ENCODE measurements at regions of chr5 and their contacts with region 1.

Region 1: DNA sequence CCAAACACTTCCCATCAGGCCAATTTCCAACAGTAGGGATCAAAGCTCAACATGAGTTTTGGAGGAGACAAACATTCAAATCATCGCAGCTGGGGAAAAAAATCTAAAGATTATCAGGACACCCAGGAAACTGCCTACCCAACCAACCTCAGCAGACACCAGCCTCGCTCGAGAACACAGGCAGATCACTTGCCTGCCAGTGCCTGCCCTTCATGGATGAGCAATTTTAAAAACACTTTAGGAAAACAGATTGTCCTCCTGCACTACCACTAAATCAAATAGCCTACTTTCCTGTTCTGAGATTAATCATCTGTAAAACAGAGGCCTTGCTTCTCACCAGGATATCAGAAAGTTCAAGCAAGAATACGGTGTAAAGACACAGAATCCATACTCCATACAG is 14.7 kb upstream of the TMEM174 start:
- DNase-seq: no peak
- ATAC-seq: no peak
- H3K4me3 ChIP-seq: no peak overlapping the region
- H3K27ac ChIP-seq: no peak overlapping the region
- H3K4me1 ChIP-seq: no peaks in the 10 kb centered on the region
- H3K27me3 ChIP-seq: no peaks in the 10 kb centered on the region
- CTCF ChIP-seq: no peak

Region 2: GRCh38 chr5:72733810-72734209 is 424.5 kb before region 1 on chr5:
- CTCF ChIA-PET with region 1: no interaction called
- POLR2A ChIA-PET with region 1: no interaction called
- in situ Hi-C with region 1: no loop called
- intact Hi-C with region 1: no loop called
- DNase-seq: no peak
- ATAC-seq: no peak
- H3K4me3 ChIP-seq: no peak overlapping the region
- H3K27ac ChIP-seq: no peak overlapping the region
- H3K4me1 ChIP-seq: no peaks in the 10 kb centered on the region
- H3K27me3 ChIP-seq: no peaks in the 10 kb centered on the region
- CTCF ChIP-seq: no peak

Region 3: DNA sequence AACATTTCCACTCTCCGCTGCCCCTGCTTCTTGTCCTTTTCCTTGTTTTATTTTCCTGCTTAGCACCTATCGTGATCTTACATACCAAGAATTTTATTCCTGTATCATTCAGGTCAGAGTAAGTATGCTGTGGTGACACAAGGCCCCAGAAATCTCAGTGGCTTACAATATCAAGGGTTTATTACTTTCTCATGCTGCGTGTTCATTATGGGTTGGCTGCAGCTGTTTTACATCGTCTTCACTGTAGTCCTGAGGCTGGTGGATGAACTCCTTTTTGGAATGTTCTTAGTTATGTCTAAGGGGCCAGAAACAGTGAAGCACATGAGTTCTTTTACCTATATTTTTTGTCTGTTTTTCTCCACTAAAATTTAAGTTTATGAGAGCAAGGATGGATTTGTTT is 151.3 kb before region 1 on chr5:
- CTCF ChIA-PET with region 1: no interaction called
- POLR2A ChIA-PET with region 1: no interaction called
- in situ Hi-C with region 1: no loop called
- intact Hi-C with region 1: no loop called
- DNase-seq: no peak
- ATAC-seq: no peak
- H3K4me3 ChIP-seq: no peak overlapping the region
- H3K27ac ChIP-seq: no peak overlapping the region
- H3K4me1 ChIP-seq: no peaks in the 10 kb centered on the region
- H3K27me3 ChIP-seq: no peaks in the 10 kb centered on the region
- CTCF ChIP-seq: no peak

Region 4: DNA sequence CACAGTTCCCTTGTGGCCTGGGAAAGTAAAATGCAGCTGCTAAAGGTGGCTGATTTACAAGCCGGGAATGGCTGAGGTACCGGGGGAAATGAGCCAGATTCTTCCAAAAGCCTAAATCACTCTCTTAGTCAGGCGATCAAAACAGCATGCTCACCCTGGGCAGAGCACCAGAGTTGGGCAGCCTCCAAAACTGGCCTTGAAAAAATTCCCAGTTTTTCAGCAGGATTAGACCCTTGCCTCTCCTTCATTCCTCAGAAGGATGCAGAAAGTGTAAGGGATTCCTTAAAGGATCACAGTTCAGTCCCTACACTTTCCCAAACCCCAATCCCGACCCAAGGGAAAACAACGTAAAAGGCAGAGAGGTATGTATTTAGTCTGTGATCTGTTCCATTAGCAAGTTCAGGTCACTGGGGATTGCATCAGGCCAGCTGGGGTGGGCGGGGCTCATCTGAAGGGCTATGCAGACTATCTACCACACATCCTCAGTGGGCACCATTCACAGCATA is 31.6 kb after region 1 on chr5:
- CTCF ChIA-PET with region 1: no interaction called
- POLR2A ChIA-PET with region 1: interaction called, 17 read pairs
- in situ Hi-C with region 1: no loop called
- intact Hi-C with region 1: no loop called
- DNase-seq: no peak
- ATAC-seq: no peak
- H3K4me3 ChIP-seq: no peak overlapping the region
- H3K27ac ChIP-seq: peak overlapping the region; percentile 7; the same call in 1 of the 2 replicates
- H3K4me1 ChIP-seq: no peaks in the 10 kb centered on the region
- H3K27me3 ChIP-seq: no peaks in the 10 kb centered on the region
- CTCF ChIP-seq: no peak

Measured in Panc1 (cell line).